Activated naive CD4-positive, alpha-beta T cell treated with anti-CD3 and anti-CD28 coated beads, Interleukin-2, amount 10 ng/mL, durations not matched to agents 7 days and 5 days (primary cell): ENCODE measurements at regions of chr16 and their contacts with region 1.

Region 1: DNA sequence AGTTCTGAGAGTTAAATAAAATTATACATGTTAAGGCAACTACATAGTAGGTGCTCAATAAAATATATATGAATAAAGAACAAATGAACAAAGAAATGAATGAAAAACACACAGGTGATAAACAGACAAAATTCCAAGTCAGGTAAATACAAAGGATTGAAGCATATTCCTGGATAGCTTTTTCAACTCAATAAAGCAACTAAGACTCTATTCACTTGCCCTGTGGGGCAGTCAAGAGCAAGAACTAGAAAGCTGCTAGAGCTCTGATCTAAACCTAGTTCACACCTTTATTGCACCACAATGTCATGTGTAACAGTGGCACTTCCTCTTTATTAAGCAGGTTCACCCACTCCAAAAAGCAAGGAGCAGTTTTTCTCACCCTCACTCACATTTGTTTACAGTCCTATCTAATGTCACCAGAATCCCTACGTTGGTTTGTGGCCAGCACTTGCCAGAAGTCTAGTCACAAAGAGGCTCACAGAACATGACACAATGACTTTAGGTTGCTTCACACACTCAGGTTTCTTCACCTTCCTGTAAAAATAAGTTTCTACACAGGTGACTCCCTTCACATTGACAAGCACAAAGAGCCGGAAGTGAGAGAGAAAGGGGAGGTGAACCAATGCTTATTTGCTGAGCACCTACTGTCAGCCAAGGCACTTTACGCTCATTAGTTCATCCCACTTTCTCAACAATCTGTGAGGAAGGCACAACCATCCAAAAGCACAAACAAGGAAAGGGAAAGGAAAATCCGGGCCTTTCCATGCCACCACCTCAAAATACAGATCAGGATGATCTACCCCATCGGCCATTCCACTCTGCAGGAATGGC is 70.8 kb downstream of the XPO6 start:
- DNase-seq: peak; percentile 81
- H3K4me3 Mint-ChIP-seq: peak overlapping the region; percentile 71
- H3K27ac Mint-ChIP-seq: peak overlapping the region; percentile 100
- H3K4me1 Mint-ChIP-seq: peaks cover 97% of the 10 kb centered on the region
- H3K27me3 Mint-ChIP-seq: no peaks in the 10 kb centered on the region

Region 2: DNA sequence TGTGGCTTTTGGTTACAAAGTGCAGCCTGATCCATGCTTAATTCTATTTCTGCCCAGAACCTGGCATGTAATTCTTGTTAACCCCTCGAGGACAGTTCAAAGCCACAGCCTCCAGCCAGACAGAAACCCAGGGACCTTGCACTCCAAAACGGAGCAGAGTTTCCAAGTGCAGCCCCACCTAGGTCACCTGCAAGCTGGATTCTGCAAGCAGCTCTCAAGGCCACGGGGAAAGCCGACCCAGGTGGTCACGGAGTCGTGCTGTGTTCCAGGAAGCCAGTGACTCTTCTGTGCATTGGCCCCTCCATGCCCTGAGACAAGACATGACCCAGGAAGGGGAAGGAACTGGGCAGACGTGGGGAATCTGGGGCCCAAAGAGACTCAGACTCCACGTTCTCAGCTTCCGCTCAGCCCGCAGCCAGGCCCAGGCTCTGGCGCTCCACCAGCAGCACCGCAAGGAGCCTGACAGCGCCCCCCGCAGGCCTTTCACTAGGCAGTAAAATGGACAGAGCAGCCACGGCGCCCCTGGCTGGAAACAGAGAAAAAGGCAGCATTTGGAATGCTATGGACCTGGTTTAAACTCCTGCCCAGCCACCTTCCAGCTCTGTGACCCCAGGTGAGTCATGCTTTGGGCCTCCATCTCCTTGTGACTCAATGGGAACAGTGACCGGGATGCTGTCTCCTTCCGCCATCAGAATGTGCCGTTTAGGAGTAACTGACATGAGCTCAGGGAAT is 50.2 kb before region 1 on chr16:
- CTCF ChIA-PET with region 1: no interaction called
- DNase-seq: no peak
- H3K4me3 Mint-ChIP-seq: no peak overlapping the region
- H3K27ac Mint-ChIP-seq: no peak overlapping the region
- H3K4me1 Mint-ChIP-seq: no peaks in the 10 kb centered on the region
- H3K27me3 Mint-ChIP-seq: no peaks in the 10 kb centered on the region

Region 3: GRCh38 chr16:28188085-28188916 is 47.3 kb after region 1 on chr16:
- CTCF ChIA-PET with region 1: interaction called, 12 read pairs
- DNase-seq: no peak
- H3K4me3 Mint-ChIP-seq: peak overlapping the region; percentile 46
- H3K27ac Mint-ChIP-seq: peak overlapping the region; percentile 94
- H3K4me1 Mint-ChIP-seq: peaks cover 91% of the 10 kb centered on the region
- H3K27me3 Mint-ChIP-seq: no peaks in the 10 kb centered on the region

Region 4: DNA sequence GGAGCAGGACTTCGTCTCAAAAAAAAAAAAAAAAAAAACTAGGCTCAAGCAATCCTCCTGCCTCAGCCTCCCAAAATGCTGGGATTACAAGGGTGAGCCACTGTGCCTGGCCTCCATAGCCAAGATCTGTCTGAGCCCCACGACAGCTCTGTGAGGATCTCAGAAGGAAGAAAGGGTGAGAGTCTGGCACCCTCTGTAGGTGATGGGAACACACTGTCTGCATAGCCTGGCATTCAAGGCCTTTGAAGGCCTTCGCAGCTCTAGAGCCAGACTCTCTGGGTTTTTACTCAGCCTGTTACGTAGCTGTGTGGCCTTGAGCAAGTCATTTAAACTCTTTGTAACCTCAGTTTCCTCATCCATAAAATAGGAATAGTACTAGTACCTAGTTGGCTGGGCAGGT is 77.1 kb after region 1 on chr16:
- CTCF ChIA-PET with region 1: interaction called, 100 read pairs
- DNase-seq: peak; percentile 80
- H3K4me3 Mint-ChIP-seq: no peak overlapping the region
- H3K27ac Mint-ChIP-seq: no peak overlapping the region
- H3K4me1 Mint-ChIP-seq: peaks cover 11% of the 10 kb centered on the region
- H3K27me3 Mint-ChIP-seq: no peaks in the 10 kb centered on the region